ENCODE measurements at regions of chr21 and their contacts with region 1.

Region 1: DNA sequence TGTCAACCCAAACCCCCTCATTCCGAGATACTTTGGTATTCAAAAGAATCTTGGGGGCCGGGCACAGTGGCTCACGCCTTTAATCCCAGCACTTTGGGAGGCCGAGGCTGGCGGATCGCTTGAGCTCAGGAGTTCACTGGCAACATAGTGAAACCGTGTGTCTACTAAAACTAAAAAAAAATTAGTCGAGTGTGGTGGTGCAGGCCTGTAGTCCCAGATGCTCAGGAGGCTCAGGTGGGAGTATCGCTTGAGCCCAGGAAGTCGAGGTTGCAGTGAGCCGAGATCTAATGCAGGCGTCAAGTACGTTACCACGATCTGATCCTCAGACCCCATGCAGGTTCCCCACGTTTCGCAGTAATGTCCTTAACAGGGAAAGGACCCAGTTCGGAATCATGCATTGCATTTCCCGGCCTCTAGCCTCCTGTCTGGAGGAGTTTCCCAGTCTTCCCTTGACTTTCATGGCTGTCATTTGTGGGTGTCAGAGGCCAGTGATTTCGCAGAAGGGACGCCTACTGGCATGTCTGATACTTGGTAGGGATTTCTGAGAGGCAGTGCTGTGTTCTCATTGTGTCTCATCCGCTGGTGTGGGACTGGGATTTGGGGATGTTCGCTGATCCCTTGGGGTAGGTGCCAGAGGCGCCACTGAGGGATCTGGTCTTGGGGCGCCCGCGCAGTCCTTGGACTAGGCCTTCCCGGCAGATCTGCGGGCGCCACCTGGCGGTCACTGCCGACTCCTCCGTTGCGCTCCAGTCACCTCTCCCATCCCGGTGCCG is 39.3 kb upstream of the HMGN1 start:
- DNase-seq: peak; percentile 94 to 97 (median 97)
- ATAC-seq: peak; percentile 88 to 90
- H3K4me3 ChIP-seq: peak overlapping the region; percentile 73
- H3K27ac ChIP-seq: peak overlapping the region; percentile 50
- H3K4me1 ChIP-seq: peaks cover 4% of the 10 kb centered on the region
- H3K27me3 ChIP-seq: no peaks in the 10 kb centered on the region

Region 2: DNA sequence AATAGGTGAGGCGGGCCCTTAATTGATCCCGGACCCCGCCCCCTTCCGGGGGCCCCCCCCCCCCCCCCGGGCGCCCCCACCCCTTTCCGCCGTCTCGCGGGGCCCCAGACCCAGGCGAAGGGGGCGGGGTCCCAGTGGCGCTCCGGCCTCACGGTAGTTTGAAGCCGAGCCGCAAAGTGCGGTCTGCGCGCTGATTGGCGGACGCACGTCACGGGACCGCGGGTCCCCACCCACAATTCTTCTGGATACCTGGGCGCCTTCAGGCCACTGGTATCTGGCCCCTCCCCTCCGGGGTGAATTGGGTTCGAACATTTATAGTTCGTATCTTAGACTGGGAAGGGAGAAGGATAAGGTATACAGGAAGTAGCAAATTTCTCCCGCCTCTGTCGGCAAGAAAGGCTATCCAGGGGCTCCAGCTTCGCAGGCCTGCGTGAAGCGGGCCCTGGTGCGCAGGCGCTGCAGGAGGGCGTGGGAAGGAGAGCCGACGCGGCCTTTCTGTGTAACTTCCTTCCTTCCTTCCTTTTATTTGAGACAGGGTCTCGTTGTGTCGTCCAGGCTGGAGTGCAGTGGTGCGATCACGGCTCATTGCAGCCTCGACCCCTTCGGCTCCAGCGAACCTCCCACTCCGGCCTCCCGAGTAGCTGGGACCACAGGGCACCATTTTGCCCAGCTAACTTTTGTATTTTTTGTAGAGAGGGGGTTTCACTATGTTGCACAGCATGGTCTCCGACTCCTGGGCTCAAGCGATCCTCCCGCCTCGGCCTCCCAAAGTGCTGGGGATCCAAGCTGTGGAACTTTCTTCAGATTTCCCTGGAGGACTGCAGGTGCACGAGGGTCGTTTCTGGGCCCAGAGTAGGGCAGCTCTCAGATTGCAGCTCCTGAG is 38.8 kb before region 1 on chr21:
- intact Hi-C with region 1: loop called in 1 of 4 experiments (anchors 5 kb)
- DNase-seq: peak; percentile 97 to 98 (median 98)
- ATAC-seq: peak; percentile 97
- H3K4me3 ChIP-seq: peak overlapping the region; percentile 89
- H3K27ac ChIP-seq: peak overlapping the region; percentile 85
- H3K4me1 ChIP-seq: peaks cover 3% of the 10 kb centered on the region
- H3K27me3 ChIP-seq: no peaks in the 10 kb centered on the region

Region 3: GRCh38 chr21:39430457-39430856 is 42.2 kb after region 1 on chr21:
- intact Hi-C with region 1: no loop called
- DNase-seq: no peak
- ATAC-seq: no peak
- H3K4me3 ChIP-seq: no peak overlapping the region
- H3K27ac ChIP-seq: no peak overlapping the region
- H3K4me1 ChIP-seq: no peaks in the 10 kb centered on the region
- H3K27me3 ChIP-seq: no peaks in the 10 kb centered on the region